ENCODE measurements at regions of chr20 and their contacts with region 1.

Region 1: GRCh38 chr20:16573001-16573965 is at the start of gene KIF16B:
- DNase-seq: peak; percentile 92
- H3K4me3 Mint-ChIP-seq: peak within 1 kb of the TSS; percentile 87
- H3K27ac Mint-ChIP-seq: peak within 1 kb of the TSS; percentile 75
- H3K4me1 Mint-ChIP-seq: peaks cover 45% of the 10 kb centered on the region
- H3K27me3 Mint-ChIP-seq: no peaks in the 10 kb centered on the region
- total RNA-seq, gene KIF16B: 7.7 to 7.9 TPM

Region 2: GRCh38 chr20:16517946-16518783 is 55.1 kb before region 1 on chr20:
- CTCF ChIA-PET with region 1: no interaction called
- POLR2A ChIA-PET with region 1: no interaction called
- intact Hi-C with region 1: loop called (anchors 1 kb)
- DNase-seq: peak; percentile 37
- H3K4me3 Mint-ChIP-seq: no peak overlapping the region
- H3K27ac Mint-ChIP-seq: no peak overlapping the region
- H3K4me1 Mint-ChIP-seq: no peaks in the 10 kb centered on the region
- H3K27me3 Mint-ChIP-seq: no peaks in the 10 kb centered on the region

Region 3: GRCh38 chr20:16777126-16777525 is 203.8 kb after region 1 on chr20:
- CTCF ChIA-PET with region 1: no interaction called
- POLR2A ChIA-PET with region 1: no interaction called
- intact Hi-C with region 1: no loop called
- DNase-seq: no peak
- H3K4me3 Mint-ChIP-seq: no peak overlapping the region
- H3K27ac Mint-ChIP-seq: no peak overlapping the region
- H3K4me1 Mint-ChIP-seq: no peaks in the 10 kb centered on the region
- H3K27me3 Mint-ChIP-seq: peaks cover 1% of the 10 kb centered on the region